Heart left ventricle (tissue), 16 donors: ENCODE measurements at regions of chr16 and their contacts with region 1.

Region 1: GRCh38 chr16:3364774-3365427 is 9.2 kb downstream of the OR2C1 start:
- DNase-seq: peak; percentile 87 to 97 (median 92)
- ATAC-seq: peak; percentile 99 to 100 (median 99)
- H3K4me3 ChIP-seq: peak overlapping the region; percentile 40 to 90 (median 62)
- H3K27ac ChIP-seq: peak overlapping the region; percentile 79 to 94 (median 88)
- H3K4me1 ChIP-seq: peaks cover 0 to 8% (median 0%) of the 10 kb centered on the region in 12 donors
- H3K27me3 ChIP-seq: peaks cover 0 to 9% (median 0%) of the 10 kb centered on the region in 9 donors
- CTCF ChIP-seq: no peak
- POLR2A ChIP-seq: peak in 1 of 2 donors; percentile 41

Region 2: GRCh38 chr16:3457434-3458252 is 92.7 kb after region 1 on chr16:
- intact Hi-C with region 1: loop called in 1 of 10 experiments (anchors 10 kb)
- DNase-seq: peak; percentile 91 to 95 (median 93)
- ATAC-seq: peak; percentile 69 to 94 (median 90)
- H3K4me3 ChIP-seq: peak overlapping the region; percentile 74 to 99 (median 80)
- H3K27ac ChIP-seq: peak overlapping the region; percentile 94 to 99 (median 98)
- H3K4me1 ChIP-seq: peaks cover 16 to 64% (median 57%) of the 10 kb centered on the region in 12 donors
- H3K27me3 ChIP-seq: no peaks in the 10 kb centered on the region
- CTCF ChIP-seq: peak in 11 of 12 donors; percentile 24 to 64 (median 50)
- POLR2A ChIP-seq: peak in 1 of 2 donors; percentile 56

Region 3: GRCh38 chr16:3509470-3509928 is 144.6 kb after region 1 on chr16:
- intact Hi-C with region 1: loop called in 1 of 10 experiments (anchors 10 kb)
- DNase-seq: no peak
- ATAC-seq: no peak
- H3K4me3 ChIP-seq: no peak overlapping the region
- H3K27ac ChIP-seq: peak overlapping the region in 1 of 12 donors; percentile 42
- H3K4me1 ChIP-seq: peaks cover 0 to 10% (median 0%) of the 10 kb centered on the region in 12 donors
- H3K27me3 ChIP-seq: no peaks in the 10 kb centered on the region
- CTCF ChIP-seq: no peak
- POLR2A ChIP-seq: no peak